Activated T-helper 1 cell treated with anti-CD3 and anti-CD28 coated beads, Interleukin-12 subunit alpha, Interleukin-12 subunit beta, Interleukin-2, Interleukin-4 antibody, amounts not matched to agents 30 ng/mL and 10 ng/mL and 1 ng/mL, durations not matched to agents 14 hours and 24 hours and 36 hours (primary cell): ENCODE measurements at regions of chr3 and their contacts with region 1.

Region 1: GRCh38 chr3:38136777-38137614 is at the start of gene ACAA1:
- DNase-seq: peak; percentile 96
- H3K4me3 Mint-ChIP-seq: peak within 1 kb of the TSS; percentile 94
- H3K27ac Mint-ChIP-seq: peak within 1 kb of the TSS; percentile 94
- H3K4me1 Mint-ChIP-seq: peaks cover 72% of the 10 kb centered on the region
- H3K27me3 Mint-ChIP-seq: no peaks in the 10 kb centered on the region
- total RNA-seq, gene ACAA1: 69.3 and 73.4 TPM in 2 replicates

Region 2: DNA sequence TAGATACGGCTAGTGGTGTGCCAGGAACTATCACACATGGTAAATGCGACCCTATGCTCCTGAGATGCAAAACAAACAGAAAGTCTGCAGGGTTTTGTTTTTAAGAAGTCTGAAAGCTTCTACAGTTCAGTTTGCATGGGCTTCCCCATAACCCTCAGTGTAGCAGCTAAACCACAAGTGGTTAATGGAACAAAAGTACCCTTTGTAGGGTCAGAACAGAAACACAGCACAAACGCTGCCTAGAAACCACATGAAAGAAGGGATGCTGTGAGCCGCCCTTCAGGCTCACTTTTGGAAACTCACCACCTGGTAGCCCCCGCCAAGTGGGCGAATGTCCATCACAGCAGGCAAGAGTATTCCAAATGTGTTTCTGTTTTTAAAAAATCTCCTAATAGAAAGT is 229.1 kb before region 1 on chr3:
- intact Hi-C with region 1: loop called (anchors 5 kb)
- DNase-seq: peak; percentile 56
- H3K4me3 Mint-ChIP-seq: peak overlapping the region; percentile 67
- H3K27ac Mint-ChIP-seq: peak overlapping the region; percentile 84
- H3K4me1 Mint-ChIP-seq: peaks cover 53% of the 10 kb centered on the region
- H3K27me3 Mint-ChIP-seq: peaks cover 15% of the 10 kb centered on the region

Region 3: GRCh38 chr3:38067508-38068233 is 69.3 kb before region 1 on chr3:
- intact Hi-C with region 1: no loop called
- DNase-seq: no peak
- H3K4me3 Mint-ChIP-seq: no peak overlapping the region
- H3K27ac Mint-ChIP-seq: no peak overlapping the region
- H3K4me1 Mint-ChIP-seq: no peaks in the 10 kb centered on the region
- H3K27me3 Mint-ChIP-seq: peaks cover 2% of the 10 kb centered on the region

Region 4: GRCh38 chr3:38154033-38154494 is 17.1 kb after region 1 on chr3:
- intact Hi-C with region 1: loop called (anchors 1 kb)
- DNase-seq: no peak
- H3K4me3 Mint-ChIP-seq: no peak overlapping the region
- H3K27ac Mint-ChIP-seq: no peak overlapping the region
- H3K4me1 Mint-ChIP-seq: peaks cover 54% of the 10 kb centered on the region
- H3K27me3 Mint-ChIP-seq: no peaks in the 10 kb centered on the region

Region 5: DNA sequence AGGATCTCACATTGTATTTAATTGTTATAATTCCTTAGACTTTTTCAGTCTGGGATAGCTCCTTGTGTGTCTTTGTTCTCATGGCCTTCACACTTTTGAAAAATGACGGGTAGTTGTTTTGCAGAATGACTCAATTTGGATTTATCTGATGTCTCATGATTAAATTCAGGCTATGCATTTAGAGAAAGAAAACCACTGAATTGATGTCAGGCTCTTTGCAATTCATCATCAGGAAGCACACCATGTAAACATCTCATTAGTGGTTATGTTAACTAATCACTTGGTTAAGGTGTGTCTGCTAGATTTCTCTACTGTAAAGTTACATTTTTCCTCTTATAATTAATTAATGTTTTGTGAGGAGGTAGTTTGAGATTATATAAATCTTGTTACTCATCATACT is 120.6 kb after region 1 on chr3:
- intact Hi-C with region 1: loop called (anchors 5 kb)
- DNase-seq: no peak
- H3K4me3 Mint-ChIP-seq: no peak overlapping the region
- H3K27ac Mint-ChIP-seq: peak overlapping the region; percentile 4
- H3K4me1 Mint-ChIP-seq: peaks cover 23% of the 10 kb centered on the region
- H3K27me3 Mint-ChIP-seq: no peaks in the 10 kb centered on the region

Region 6: DNA sequence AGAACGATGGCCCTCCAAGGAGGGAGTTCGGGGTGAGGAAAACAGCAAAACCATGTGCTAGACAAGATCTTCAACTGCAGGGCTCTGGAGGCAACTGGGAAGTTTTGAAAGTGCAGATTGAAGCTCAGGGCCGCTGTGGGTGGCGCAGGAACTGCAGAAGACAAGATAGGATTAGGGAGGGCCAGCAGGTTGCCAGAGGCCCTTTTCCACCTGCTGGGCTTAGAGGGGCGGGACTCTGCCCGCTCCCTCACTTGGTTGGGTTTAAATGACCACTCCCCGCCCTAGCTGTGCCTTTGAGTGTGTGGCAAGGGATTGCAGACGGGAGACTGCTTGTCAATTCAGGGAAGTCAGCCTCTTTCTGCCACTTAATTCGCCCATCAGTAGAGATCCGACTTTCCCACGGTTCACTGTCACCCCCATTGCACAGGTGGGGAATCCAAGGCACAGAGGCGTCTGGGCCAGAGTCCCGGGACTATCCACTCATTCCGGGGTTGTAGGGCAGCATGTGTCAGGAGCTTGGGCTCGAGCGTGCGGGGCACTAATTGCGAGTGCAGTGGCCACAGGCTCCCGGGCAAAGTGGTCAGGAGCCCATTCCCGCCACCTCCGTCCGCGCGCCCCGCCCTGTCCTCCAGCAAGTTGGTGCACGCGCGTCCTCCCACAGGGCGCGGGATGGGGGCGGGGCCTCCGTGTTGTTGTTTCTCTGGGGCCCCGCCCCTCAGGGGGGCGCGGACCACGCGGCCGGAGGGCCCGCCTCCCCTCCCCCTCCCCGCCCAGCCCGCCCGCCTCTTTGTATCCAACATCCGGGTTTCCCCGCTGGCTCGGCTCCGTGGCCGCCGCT is 316.3 kb after region 1 on chr3 and contains the start of gene ACVR2B:
- intact Hi-C with region 1: loop called (anchors 1 kb)
- DNase-seq: peak; percentile 66
- H3K4me3 Mint-ChIP-seq: peak within 1 kb of the TSS; percentile 97
- H3K27ac Mint-ChIP-seq: peak within 1 kb of the TSS; percentile 80
- H3K4me1 Mint-ChIP-seq: peaks cover 10% of the 10 kb centered on the region
- H3K27me3 Mint-ChIP-seq: peaks cover 15% of the 10 kb centered on the region
- total RNA-seq, gene ACVR2B: 10.4 and 10.5 TPM in 2 replicates

Region 7: GRCh38 chr3:38651154-38651789 is 514.3 kb after region 1 on chr3:
- intact Hi-C with region 1: loop called (anchors 5 kb)
- DNase-seq: peak; percentile 55
- H3K4me3 Mint-ChIP-seq: no peak overlapping the region
- H3K27ac Mint-ChIP-seq: no peak overlapping the region
- H3K4me1 Mint-ChIP-seq: peaks cover 12% of the 10 kb centered on the region
- H3K27me3 Mint-ChIP-seq: peaks cover 17% of the 10 kb centered on the region